Activated B cell treated with CpG ODN at 0.5 μM for 24 hours (primary cell): ENCODE measurements at regions of chr19 and their contacts with region 1.

Region 1: DNA sequence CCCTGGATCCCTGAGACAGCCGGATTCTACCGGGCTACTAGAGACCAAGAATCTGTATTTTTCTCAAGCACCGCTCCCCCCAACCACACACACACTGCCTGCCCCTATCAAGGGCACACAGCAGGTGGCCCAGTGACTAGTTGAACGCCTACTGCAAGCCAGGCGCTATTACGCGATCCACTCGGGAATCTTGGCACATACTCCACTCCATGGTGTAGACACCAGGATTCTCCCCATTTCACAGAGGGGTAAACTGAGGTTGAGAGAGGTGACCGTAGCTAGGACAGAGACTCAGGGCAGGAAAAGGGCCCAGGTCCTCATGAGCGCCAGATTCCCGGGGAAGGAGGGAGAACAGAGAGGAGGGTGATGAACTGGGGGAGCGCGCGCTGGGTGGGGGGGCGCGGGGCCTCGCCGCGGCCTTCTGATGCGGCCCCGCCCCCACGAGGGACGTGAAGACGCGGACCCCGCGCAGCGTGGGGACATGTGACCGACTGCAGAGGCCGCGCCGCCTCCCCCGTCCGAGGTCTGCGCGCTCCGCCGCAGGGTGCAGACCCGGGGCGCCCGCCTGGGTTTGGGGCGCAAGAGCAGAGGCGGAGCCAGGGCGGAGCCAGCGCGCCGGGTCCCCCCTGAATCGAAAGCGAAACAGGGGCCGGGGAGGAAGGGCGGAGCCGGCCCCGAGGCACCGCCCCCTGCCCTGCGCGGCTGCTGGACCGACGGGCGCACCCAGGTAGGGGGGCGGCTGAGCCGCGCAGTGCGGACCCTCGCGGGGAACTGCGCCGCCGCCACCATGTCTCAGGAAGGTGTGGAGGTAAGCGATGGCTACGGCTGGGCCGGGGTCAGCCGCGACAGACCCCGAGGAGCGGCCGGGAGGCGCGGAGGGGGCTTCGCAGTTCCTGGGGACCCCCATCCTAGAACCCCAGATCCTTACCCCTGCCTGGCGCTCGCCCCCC is at the start of gene SHFL:
- DNase-seq: peak; percentile 82
- ATAC-seq: peak; percentile 92
- H3K4me3 Mint-ChIP-seq: peak within 1 kb of the TSS; percentile 90
- H3K27ac Mint-ChIP-seq: peak within 1 kb of the TSS; percentile 85
- H3K4me1 Mint-ChIP-seq: peaks cover 14% of the 10 kb centered on the region
- H3K27me3 Mint-ChIP-seq: no peaks in the 10 kb centered on the region
- CTCF ChIP-seq: no peak
- total RNA-seq, gene SHFL: 61.3 and 61.4 TPM in 2 replicates

Region 2: GRCh38 chr19:10036601-10037071 is 49.3 kb before region 1 on chr19:
- CTCF ChIA-PET with region 1: no interaction called
- POLR2A ChIA-PET with region 1: no interaction called
- intact Hi-C with region 1: no loop called
- DNase-seq: no peak
- ATAC-seq: no peak
- H3K4me3 Mint-ChIP-seq: no peak overlapping the region
- H3K27ac Mint-ChIP-seq: no peak overlapping the region
- H3K4me1 Mint-ChIP-seq: no peaks in the 10 kb centered on the region
- H3K27me3 Mint-ChIP-seq: peaks cover 34% of the 10 kb centered on the region
- CTCF ChIP-seq: no peak

Region 3: GRCh38 chr19:10120538-10121189 is 34.7 kb after region 1 on chr19:
- CTCF ChIA-PET with region 1: no interaction called
- POLR2A ChIA-PET with region 1: no interaction called
- intact Hi-C with region 1: loop called (anchors 5 kb)
- DNase-seq: no peak
- ATAC-seq: no peak
- H3K4me3 Mint-ChIP-seq: no peak overlapping the region
- H3K27ac Mint-ChIP-seq: no peak overlapping the region
- H3K4me1 Mint-ChIP-seq: peaks cover 29% of the 10 kb centered on the region
- H3K27me3 Mint-ChIP-seq: no peaks in the 10 kb centered on the region
- CTCF ChIP-seq: no peak

Region 4: DNA sequence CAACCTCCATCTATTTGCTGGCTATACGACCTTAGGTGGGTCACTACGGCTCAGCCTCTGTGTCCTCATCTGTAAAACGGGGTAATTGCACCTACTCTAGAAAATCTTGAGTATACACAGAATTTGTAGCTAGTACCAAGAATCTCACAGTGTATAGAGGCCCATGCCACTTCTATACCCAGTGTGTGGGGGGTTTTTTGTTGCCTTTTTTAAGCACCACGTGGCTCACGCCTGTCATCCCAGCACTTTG is 109.3 kb after region 1 on chr19:
- CTCF ChIA-PET with region 1: no interaction called
- POLR2A ChIA-PET with region 1: no interaction called
- intact Hi-C with region 1: no loop called
- DNase-seq: no peak
- ATAC-seq: peak; percentile 2
- H3K4me3 Mint-ChIP-seq: peak overlapping the region; percentile 94
- H3K27ac Mint-ChIP-seq: peak overlapping the region; percentile 89
- H3K4me1 Mint-ChIP-seq: peaks cover 34% of the 10 kb centered on the region
- H3K27me3 Mint-ChIP-seq: no peaks in the 10 kb centered on the region
- CTCF ChIP-seq: no peak